ENCODE measurements at regions of chr2 and their contacts with region 1.

Region 1: DNA sequence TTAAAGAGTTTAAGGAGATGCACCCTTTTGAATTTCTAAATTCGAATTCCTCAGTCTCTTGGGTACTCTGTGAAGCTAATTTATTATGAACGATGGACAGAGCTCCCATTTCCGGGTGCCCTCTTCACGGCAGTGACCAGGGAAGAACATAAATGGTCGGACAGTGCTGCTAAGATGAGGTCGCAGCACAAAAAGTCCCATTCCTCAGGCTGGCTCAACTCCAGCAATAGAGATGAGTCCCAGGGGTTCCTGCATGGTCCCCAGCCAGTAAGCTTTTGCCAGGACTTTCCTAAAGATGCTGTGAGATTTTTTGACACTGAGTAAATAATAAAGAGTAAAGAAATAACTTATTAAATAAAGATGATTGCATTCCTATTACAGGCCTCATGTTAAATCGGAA is 43.0 kb upstream of the STK39 start:
- DNase-seq: no peak
- ATAC-seq: no peak
- H3K4me3 Mint-ChIP-seq: no peak overlapping the region
- H3K27ac Mint-ChIP-seq: no peak overlapping the region
- H3K4me1 Mint-ChIP-seq: no peaks in the 10 kb centered on the region
- H3K27me3 Mint-ChIP-seq: no peaks in the 10 kb centered on the region

Region 2: DNA sequence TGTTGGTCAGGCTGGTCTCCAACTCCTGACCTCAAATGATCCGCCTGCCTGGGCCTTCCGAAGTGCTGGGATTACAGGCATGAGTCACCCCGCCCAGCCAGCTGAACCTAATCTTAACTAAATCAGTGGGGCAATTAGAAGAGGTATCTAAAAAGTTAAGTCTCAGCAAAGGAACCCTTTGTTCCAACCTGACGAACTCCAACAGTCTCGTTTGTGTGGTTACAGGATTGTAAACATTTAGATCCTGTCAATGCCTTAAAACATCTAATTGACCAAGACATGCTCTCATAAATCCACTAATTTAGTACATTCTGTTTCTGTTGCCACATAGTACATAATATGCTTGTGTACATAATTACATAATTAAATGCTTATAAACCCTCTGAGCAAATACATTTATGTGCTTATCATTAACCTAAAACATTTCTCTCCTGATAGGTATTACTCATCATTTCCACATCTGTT is 11.9 kb before region 1 on chr2:
- CTCF ChIA-PET with region 1: no interaction called
- POLR2A ChIA-PET with region 1: no interaction called
- intact Hi-C with region 1: loop called (anchors 1 kb)
- DNase-seq: no peak
- ATAC-seq: no peak
- H3K4me3 Mint-ChIP-seq: no peak overlapping the region
- H3K27ac Mint-ChIP-seq: no peak overlapping the region
- H3K4me1 Mint-ChIP-seq: no peaks in the 10 kb centered on the region
- H3K27me3 Mint-ChIP-seq: no peaks in the 10 kb centered on the region

Measured in activated CD4-positive, alpha-beta T cell treated with anti-CD3 and anti-CD28 coated beads for 36 hours (primary cell).